MCF 10A (cell line): ENCODE measurements at regions of chr11 and their contacts with region 1.

Region 1: DNA sequence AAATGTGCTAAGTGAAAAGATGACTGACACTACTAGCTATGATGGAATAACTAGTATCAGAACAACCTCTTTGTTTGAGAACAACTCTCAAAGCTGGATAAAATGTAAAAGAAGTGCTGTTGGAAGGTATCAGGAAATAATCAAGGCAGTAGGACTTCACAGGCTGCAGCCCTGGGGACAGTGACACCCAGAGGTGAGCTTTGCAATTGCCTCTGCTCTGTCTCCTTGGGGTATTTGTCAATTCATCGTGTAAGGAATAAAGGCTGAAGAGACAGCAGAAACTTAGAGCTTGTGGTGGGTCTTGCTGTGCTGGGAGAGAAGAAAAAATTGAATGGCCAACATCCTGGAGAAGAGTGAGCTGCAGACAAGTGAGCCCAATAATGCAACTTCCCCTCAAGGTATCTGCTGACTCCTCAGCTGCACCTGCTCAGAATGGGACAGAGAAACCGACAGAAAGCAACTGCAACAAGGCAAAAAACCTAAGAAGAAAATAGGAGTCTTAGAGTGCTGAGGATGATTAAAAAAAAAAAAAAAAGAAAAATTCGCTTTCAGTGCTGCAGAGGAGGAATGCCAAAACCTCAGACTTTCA is 141.1 kb downstream of the RCN1 start:
- DNase-seq: peak; percentile 48
- H3K4me3 Mint-ChIP-seq: no peak overlapping the region
- H3K27ac Mint-ChIP-seq: no peak overlapping the region
- H3K4me1 Mint-ChIP-seq: no peaks in the 10 kb centered on the region
- H3K27me3 Mint-ChIP-seq: peaks cover 39% of the 10 kb centered on the region
- CTCF ChIP-seq: peak; percentile 69

Region 2: DNA sequence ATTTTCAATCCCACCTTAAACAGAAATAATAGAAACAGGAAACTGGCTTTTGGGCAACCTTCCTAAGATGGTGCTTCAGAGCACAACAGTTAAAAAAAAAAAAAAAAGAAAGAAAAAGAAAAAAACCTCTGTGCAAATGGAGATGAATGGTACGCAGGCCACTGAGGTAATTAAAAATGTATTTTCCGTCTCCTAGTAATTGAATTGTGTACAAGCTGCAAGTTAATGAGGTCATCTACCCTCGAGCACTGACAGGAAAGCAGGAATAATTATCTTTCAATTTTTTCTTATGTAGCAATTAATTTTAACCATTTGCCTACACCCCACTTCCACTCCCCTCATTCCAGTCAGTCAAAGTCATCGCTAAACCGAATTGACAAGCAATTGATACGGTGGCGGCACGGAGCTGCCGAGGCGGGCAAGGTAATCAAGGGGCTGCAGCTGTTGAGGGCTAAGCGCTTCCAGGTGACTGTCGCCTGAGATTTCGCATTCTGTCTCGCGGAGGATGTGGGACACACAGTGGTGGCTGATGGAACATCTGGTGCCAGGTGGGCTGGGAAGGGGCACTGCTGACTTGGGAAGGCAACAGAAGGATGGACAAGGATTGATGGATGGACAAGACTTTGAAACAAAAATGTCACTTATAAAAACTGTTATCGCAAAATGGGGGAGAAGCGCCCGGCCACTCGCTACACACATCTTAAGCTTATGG is 31.7 kb before region 1 on chr11:
- CTCF ChIA-PET with region 1: no interaction called
- POLR2A ChIA-PET with region 1: no interaction called
- intact Hi-C with region 1: no loop called
- DNase-seq: no peak
- H3K4me3 Mint-ChIP-seq: no peak overlapping the region
- H3K27ac Mint-ChIP-seq: no peak overlapping the region
- H3K4me1 Mint-ChIP-seq: no peaks in the 10 kb centered on the region
- H3K27me3 Mint-ChIP-seq: peaks cover 16% of the 10 kb centered on the region
- CTCF ChIP-seq: no peak

Region 3: DNA sequence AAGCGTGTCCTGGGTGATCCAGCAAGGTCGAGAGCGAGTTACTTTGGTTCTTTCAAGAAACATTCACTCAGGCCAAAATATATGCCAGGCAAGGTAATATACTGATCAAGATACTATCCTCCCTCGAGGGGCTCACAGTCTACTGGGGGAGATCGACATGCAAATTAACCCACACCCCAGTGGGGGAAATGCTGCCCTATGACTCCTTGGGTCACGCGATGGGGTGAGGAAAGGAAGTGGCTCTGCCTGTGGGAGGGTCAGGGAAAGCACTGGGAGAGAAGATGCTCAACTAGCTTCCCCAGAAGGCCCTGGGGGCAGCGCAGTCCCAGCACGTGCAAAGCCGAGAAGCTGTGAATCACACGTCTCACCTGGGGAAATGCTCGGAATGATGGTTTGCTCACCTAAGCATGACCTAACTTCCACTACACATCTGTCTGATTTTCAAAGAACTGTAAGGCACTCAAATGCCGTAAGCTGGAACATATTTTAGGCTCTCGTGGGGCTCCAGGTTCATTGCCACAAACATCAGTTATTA is 10.5 kb before region 1 on chr11:
- CTCF ChIA-PET with region 1: interaction called, 21 read pairs
- POLR2A ChIA-PET with region 1: no interaction called
- intact Hi-C with region 1: no loop called
- DNase-seq: no peak
- H3K4me3 Mint-ChIP-seq: no peak overlapping the region
- H3K27ac Mint-ChIP-seq: no peak overlapping the region
- H3K4me1 Mint-ChIP-seq: no peaks in the 10 kb centered on the region
- H3K27me3 Mint-ChIP-seq: peaks cover 11% of the 10 kb centered on the region
- CTCF ChIP-seq: no peak

Region 4: DNA sequence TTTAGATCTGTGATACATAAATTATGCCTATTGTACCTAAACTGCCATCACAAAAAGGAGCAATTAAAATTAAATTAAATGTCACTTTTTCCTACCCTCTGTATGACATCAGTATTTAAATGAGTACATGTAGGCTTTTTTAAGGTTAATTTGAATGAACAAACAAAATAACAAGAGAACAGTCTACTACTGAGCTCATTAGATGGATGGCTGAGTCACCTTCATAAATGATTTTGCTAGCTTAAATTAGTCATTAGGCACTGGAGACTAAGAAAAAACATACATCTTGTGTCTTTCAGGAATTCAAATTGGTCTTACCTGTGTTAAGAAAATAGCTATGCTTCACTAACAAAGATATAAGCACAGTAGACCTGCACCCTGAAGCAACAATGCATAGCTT is 12.5 kb after region 1 on chr11:
- CTCF ChIA-PET with region 1: interaction called, 13 read pairs
- POLR2A ChIA-PET with region 1: no interaction called
- intact Hi-C with region 1: no loop called
- DNase-seq: no peak
- H3K4me3 Mint-ChIP-seq: no peak overlapping the region
- H3K27ac Mint-ChIP-seq: no peak overlapping the region
- H3K4me1 Mint-ChIP-seq: no peaks in the 10 kb centered on the region
- H3K27me3 Mint-ChIP-seq: no peaks in the 10 kb centered on the region
- CTCF ChIP-seq: no peak

Region 5: DNA sequence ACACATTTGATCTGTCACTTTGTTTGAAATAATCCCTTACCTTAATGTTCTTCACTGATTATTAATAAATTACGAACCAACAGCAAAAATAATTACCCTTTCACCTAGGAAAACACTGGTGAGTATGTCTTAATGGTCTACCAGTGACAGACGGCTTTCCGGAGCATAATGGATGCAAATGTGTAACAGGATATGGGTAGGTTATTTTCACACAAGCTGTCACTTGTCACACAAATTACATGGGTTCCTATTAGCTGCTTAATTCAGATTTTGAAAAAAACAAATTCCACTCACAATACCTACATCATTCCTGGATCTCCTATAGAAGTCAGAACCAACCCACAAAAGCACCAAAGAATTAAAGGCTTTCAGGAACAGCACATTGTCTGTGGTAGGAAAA is 75.5 kb after region 1 on chr11:
- CTCF ChIA-PET with region 1: no interaction called
- POLR2A ChIA-PET with region 1: no interaction called
- intact Hi-C with region 1: no loop called
- DNase-seq: no peak
- H3K4me3 Mint-ChIP-seq: no peak overlapping the region
- H3K27ac Mint-ChIP-seq: no peak overlapping the region
- H3K4me1 Mint-ChIP-seq: peaks cover 5% of the 10 kb centered on the region
- H3K27me3 Mint-ChIP-seq: no peaks in the 10 kb centered on the region
- CTCF ChIP-seq: no peak